Caco-2 (cell line): ENCODE measurements at regions of chr6 and their contacts with region 1.

Region 1: GRCh38 chr6:119727504-119728217 is 378.1 kb upstream of the MAN1A1 start:
- DNase-seq: peak; percentile 18 to 62
- H3K4me3 ChIP-seq: no peak overlapping the region
- H3K4me3 Mint-ChIP-seq: no peak overlapping the region
- H3K27ac Mint-ChIP-seq: peak overlapping the region; percentile 70
- H3K4me1 ChIP-seq: peaks cover 17% of the 10 kb centered on the region
- H3K4me1 Mint-ChIP-seq: peaks cover 10% of the 10 kb centered on the region
- H3K27me3 ChIP-seq: no peaks in the 10 kb centered on the region
- H3K27me3 Mint-ChIP-seq: peaks cover 7% of the 10 kb centered on the region
- CTCF ChIP-seq: no peak

Region 2: DNA sequence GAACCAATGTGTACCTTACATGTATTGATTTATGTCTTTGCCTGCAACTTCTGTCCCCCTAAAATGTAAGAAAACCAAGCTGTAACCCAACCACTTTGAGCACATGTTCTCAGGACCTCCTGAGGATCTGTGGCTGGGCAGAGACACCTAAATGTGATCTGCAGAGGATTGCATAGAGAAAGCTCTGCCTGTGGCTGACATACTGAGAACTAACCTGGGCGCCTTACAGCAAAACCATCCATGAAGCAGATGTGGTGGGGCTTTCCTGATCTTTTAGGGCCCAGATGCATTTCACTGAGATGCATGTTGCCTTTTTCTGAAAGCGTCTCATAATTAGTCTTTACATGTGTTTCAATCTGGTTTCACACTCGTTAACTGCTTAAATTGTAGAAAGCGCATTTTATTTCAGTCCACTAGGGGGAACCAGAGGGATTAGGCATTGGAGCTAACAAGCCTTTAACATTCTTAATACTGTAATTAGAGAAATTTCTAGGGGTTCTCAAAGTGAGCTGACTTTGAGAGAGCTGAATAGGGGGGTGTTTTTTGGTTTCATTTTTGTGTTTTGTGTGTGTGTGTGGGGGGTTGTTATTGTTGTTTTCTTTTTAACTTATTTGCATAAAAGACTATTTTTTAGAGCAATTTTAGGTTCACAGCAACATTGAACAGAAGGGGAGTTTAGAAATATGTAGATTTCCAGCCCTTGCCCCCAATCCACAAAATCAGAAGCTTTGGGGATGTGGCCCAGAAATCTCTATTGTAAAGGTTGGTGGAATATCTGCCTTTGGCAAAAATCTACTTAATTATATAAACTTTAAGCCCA is 598.3 kb before region 1 on chr6:
- CTCF ChIA-PET with region 1: no interaction called
- POLR2A ChIA-PET with region 1: no interaction called
- intact Hi-C with region 1: loop called (anchors 5 kb)
- DNase-seq: peak in 1 of 2 experiments; percentile 66
- H3K4me3 ChIP-seq: no peak overlapping the region
- H3K4me3 Mint-ChIP-seq: peak overlapping the region; percentile 43
- H3K27ac Mint-ChIP-seq: peak overlapping the region; percentile 33
- H3K4me1 ChIP-seq: peaks cover 35% of the 10 kb centered on the region
- H3K4me1 Mint-ChIP-seq: peaks cover 34% of the 10 kb centered on the region
- H3K27me3 ChIP-seq: no peaks in the 10 kb centered on the region
- H3K27me3 Mint-ChIP-seq: no peaks in the 10 kb centered on the region
- CTCF ChIP-seq: peak; percentile 51 to 54

Region 3: GRCh38 chr6:119757467-119757866 is 29.8 kb after region 1 on chr6:
- CTCF ChIA-PET with region 1: no interaction called
- POLR2A ChIA-PET with region 1: no interaction called
- intact Hi-C with region 1: no loop called
- DNase-seq: no peak
- H3K4me3 ChIP-seq: no peak overlapping the region
- H3K4me3 Mint-ChIP-seq: no peak overlapping the region
- H3K27ac Mint-ChIP-seq: no peak overlapping the region
- H3K4me1 ChIP-seq: no peaks in the 10 kb centered on the region
- H3K4me1 Mint-ChIP-seq: no peaks in the 10 kb centered on the region
- H3K27me3 ChIP-seq: no peaks in the 10 kb centered on the region
- H3K27me3 Mint-ChIP-seq: peaks cover 12% of the 10 kb centered on the region
- CTCF ChIP-seq: no peak

Region 4: GRCh38 chr6:121236984-121237383 is 1509.3 kb after region 1 on chr6:
- CTCF ChIA-PET with region 1: no interaction called
- POLR2A ChIA-PET with region 1: no interaction called
- intact Hi-C with region 1: loop called (anchors 5 kb)
- DNase-seq: no peak
- H3K4me3 ChIP-seq: no peak overlapping the region
- H3K4me3 Mint-ChIP-seq: no peak overlapping the region
- H3K27ac Mint-ChIP-seq: no peak overlapping the region
- H3K4me1 ChIP-seq: no peaks in the 10 kb centered on the region; the same call in 1 of the 2 replicates
- H3K4me1 Mint-ChIP-seq: no peaks in the 10 kb centered on the region
- H3K27me3 ChIP-seq: no peaks in the 10 kb centered on the region
- H3K27me3 Mint-ChIP-seq: no peaks in the 10 kb centered on the region
- CTCF ChIP-seq: no peak